Panc1 (cell line): ENCODE measurements at regions of chr2 and their contacts with region 1.

Region 1: GRCh38 chr2:215579809-215580208 is 143.9 kb upstream of the FN1 start:
- DNase-seq: no peak
- ATAC-seq: no peak
- H3K4me3 ChIP-seq: no peak overlapping the region
- H3K27ac ChIP-seq: no peak overlapping the region
- H3K4me1 ChIP-seq: no peaks in the 10 kb centered on the region
- H3K27me3 ChIP-seq: no peaks in the 10 kb centered on the region
- CTCF ChIP-seq: no peak

Region 2: DNA sequence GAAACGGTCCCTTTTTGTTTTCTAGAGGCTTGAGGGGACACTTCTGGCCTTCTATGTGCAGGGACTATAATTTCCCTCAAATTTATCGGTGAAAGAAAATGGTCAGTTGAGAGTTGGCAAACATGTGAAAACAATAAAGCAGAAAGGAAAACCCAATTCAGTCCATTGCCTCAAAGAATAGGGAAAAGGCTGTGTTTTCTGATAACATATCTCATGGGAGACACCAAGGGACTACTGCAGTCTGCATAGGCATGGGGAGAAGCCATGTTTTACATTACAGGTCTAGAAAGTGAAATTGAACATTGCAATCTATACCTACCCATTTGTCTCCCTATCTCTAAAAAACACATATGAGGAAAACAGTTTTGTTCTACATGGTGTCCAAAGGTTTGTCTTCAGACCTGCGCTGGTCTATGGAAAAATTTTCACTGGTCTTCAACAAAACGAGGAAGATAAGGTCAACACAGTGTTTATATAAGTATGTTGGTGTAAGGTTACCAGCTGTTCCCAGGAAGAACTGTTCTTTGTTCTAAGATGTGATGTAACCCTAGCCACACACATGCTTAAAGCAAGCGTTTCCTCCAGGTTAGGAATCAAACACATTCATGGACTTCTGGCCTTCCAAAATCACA is 253.8 kb after region 1 on chr2:
- CTCF ChIA-PET with region 1: no interaction called
- POLR2A ChIA-PET with region 1: interaction called, 10 read pairs
- in situ Hi-C with region 1: no loop called
- intact Hi-C with region 1: no loop called
- DNase-seq: no peak
- ATAC-seq: no peak
- H3K4me3 ChIP-seq: no peak overlapping the region
- H3K27ac ChIP-seq: no peak overlapping the region
- H3K4me1 ChIP-seq: no peaks in the 10 kb centered on the region
- H3K27me3 ChIP-seq: no peaks in the 10 kb centered on the region
- CTCF ChIP-seq: no peak